ENCODE measurements at regions of chr13 and their contacts with region 1.

Region 1: DNA sequence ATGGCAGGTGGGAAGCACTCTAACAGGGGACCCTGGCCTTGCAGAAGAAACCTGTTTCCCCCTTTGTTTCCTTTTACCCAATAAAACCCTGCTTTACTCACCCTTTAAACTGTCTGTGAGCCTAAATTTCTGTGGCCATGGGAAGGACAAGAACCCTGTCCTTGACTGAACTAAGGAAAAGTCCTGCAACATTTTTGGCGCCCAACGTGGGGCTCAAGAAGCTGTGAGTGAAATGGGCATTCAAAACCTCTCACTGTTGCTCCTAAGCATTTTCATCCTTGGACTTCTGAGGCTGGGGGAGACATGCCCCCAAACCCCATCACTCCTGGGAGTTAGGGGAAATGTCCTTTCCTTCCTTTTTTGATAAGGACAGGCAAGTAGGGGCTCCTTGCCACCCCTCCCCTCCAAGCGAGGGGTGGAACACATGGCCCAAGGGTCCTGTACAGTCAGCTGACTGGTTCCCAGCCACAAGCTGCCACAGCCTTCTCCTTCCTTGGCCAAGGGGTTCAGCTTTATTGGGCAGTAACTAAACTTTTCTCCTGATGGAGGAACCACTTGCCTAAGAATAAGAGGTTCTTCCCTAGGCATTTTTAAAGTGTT is 381.6 kb downstream of the KLF5 start:
- DNase-seq: no peak
- H3K4me3 ChIP-seq: no peak overlapping the region
- CTCF ChIP-seq: no peak
- POLR2A ChIP-seq: no peak

Region 2: GRCh38 chr13:72368031-72368430 is 1072.4 kb before region 1 on chr13:
- intact Hi-C with region 1: loop called (anchors 5 kb)
- DNase-seq: no peak
- H3K4me3 ChIP-seq: no peak overlapping the region
- CTCF ChIP-seq: no peak
- POLR2A ChIP-seq: no peak

Measured in lower leg skin (tissue), 4 donors.